ENCODE measurements at regions of chr18 and their contacts with region 1.

Region 1: GRCh38 chr18:54149078-54149697 is 75.3 kb downstream of the MBD2 start:
- DNase-seq: peak; percentile 47 to 91
- H3K4me3 ChIP-seq: peak overlapping the region; percentile 36; the same call in 1 of the 2 replicates
- H3K27ac ChIP-seq: peak overlapping the region; percentile 89
- H3K4me1 ChIP-seq: peaks cover 32% of the 10 kb centered on the region
- H3K27me3 ChIP-seq: no peaks in the 10 kb centered on the region
- CTCF ChIP-seq: no peak

Region 2: DNA sequence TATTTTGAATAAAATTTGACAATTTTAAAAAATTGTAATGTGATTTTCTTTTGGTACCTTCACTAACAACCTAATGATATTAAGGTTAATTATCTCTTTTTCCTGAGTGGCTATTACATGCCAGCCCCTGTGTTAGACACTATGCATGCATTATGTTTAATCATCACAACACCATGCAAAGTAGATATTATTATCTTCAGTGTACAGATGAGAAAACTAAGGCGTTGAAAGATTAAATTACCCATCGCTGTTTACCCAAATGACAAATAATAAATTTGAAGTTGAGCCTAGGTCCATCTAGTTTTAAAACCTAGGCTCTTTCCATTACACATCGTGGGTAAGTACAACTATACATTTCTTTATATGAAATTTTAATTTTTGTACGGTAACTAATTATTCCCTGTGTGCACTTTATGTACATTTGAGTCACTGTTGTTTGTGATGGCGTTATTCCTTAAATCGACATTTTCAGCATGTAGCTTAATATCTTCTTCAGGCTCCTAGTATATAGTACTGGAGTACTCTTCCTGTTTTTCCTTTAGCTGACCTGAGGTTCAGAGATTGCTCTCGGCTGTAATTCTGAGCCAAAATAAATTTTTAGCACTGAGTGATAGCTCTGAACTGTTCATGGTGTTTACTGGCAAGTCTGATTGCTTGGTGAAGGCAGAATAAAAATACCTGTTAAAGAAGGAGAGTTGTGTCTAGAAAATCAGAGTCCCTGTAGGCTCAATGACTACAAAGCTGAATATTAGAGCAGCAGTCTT is 89.2 kb after region 1 on chr18:
- CTCF ChIA-PET with region 1: no interaction called
- POLR2A ChIA-PET with region 1: interaction called, 10 read pairs
- intact Hi-C with region 1: no loop called
- DNase-seq: no peak
- H3K4me3 ChIP-seq: no peak overlapping the region
- H3K27ac ChIP-seq: no peak overlapping the region
- H3K4me1 ChIP-seq: no peaks in the 10 kb centered on the region
- H3K27me3 ChIP-seq: no peaks in the 10 kb centered on the region
- CTCF ChIP-seq: no peak